Heart left ventricle (tissue), 16 donors: ENCODE measurements at regions of chr12 and their contacts with region 1.

Region 1: DNA sequence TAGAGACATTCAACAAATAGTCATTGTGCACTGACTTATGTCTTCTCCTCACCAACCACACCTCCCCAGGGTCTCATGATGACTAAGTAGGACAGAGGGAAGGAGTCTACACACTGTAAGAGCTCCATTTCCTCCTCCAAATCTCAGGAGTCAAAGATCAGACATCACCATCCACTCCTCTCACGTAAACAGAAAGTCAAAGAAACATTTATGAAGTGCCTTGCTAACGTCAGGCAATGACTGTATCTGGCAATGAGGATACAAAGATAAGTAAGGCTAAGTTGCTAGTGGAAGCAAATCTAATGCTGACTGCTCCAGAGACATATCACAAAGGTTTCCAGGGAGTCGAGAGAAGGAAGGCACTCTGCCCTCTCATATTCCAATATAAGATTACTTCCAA is 88.9 kb downstream of the SLC2A13 start:
- DNase-seq: no peak
- ATAC-seq: peak; percentile 50 to 93 (median 84)
- H3K4me3 ChIP-seq: no peak overlapping the region
- H3K27ac ChIP-seq: peak overlapping the region in 2 of 12 donors; percentile 2 to 38
- H3K4me1 ChIP-seq: peaks cover 0 to 25% (median 12%) of the 10 kb centered on the region in 12 donors
- H3K27me3 ChIP-seq: no peaks in the 10 kb centered on the region
- CTCF ChIP-seq: no peak
- POLR2A ChIP-seq: no peak

Region 2: GRCh38 chr12:40054554-40055227 is 37.7 kb after region 1 on chr12:
- intact Hi-C with region 1: loop called in 1 of 10 experiments (anchors 5 kb)
- DNase-seq: peak in 2 of 5 donors; percentile 48 to 60
- ATAC-seq: peak; percentile 67 to 93 (median 80)
- H3K4me3 ChIP-seq: peak overlapping the region in 6 of 12 donors; percentile 13 to 26 (median 17)
- H3K27ac ChIP-seq: peak overlapping the region in 11 of 12 donors; percentile 43 to 75 (median 65)
- H3K4me1 ChIP-seq: peaks cover 0 to 20% (median 6%) of the 10 kb centered on the region in 12 donors
- H3K27me3 ChIP-seq: no peaks in the 10 kb centered on the region
- CTCF ChIP-seq: no peak
- POLR2A ChIP-seq: no peak